Sciatic nerve (tissue), 2 donors: ENCODE measurements at regions of chr17 and their contacts with region 1.

Region 1: GRCh38 chr17:56939901-56940343 is 20.9 kb downstream of the COIL start:
- DNase-seq: no peak
- ATAC-seq: peak; percentile 70

Region 2: GRCh38 chr17:56833809-56834379 is 106.0 kb before region 1 on chr17 and contains the starts of genes C17orf67 and DGKE:
- intact Hi-C with region 1: loop called (anchors 10 kb)
- DNase-seq: peak; percentile 100
- ATAC-seq: peak; percentile 99
- total RNA-seq, gene C17orf67: 6.2 TPM
- total RNA-seq, gene DGKE: 16.8 TPM

Region 3: GRCh38 chr17:56960596-56961538 is 20.9 kb after region 1 on chr17 and contains the start of gene COIL:
- intact Hi-C with region 1: no loop called
- DNase-seq: peak; percentile 97
- ATAC-seq: peak; percentile 98
- total RNA-seq, gene COIL: 13.7 TPM

Region 4: GRCh38 chr17:56977673-56978395 is 37.9 kb after region 1 on chr17 and contains the start of gene SCPEP1:
- intact Hi-C with region 1: no loop called
- DNase-seq: peak; percentile 89
- ATAC-seq: peak; percentile 99
- total RNA-seq, gene SCPEP1: 51.8 TPM

Region 5: GRCh38 chr17:57106107-57106835 is 166.3 kb after region 1 on chr17:
- intact Hi-C with region 1: no loop called
- DNase-seq: no peak
- ATAC-seq: no peak